Lower leg skin (tissue), 4 donors: ENCODE measurements at regions of chr3 and their contacts with region 1.

Region 1: GRCh38 chr3:77873598-77873997 is 833.7 kb downstream of the ROBO2 start:
- DNase-seq: no peak
- H3K4me3 ChIP-seq: no peak overlapping the region
- CTCF ChIP-seq: no peak
- POLR2A ChIP-seq: no peak

Region 2: GRCh38 chr3:78013653-78014052 is 140.1 kb after region 1 on chr3:
- intact Hi-C with region 1: no loop called
- DNase-seq: no peak
- H3K4me3 ChIP-seq: no peak overlapping the region
- CTCF ChIP-seq: no peak
- POLR2A ChIP-seq: no peak

Region 3: DNA sequence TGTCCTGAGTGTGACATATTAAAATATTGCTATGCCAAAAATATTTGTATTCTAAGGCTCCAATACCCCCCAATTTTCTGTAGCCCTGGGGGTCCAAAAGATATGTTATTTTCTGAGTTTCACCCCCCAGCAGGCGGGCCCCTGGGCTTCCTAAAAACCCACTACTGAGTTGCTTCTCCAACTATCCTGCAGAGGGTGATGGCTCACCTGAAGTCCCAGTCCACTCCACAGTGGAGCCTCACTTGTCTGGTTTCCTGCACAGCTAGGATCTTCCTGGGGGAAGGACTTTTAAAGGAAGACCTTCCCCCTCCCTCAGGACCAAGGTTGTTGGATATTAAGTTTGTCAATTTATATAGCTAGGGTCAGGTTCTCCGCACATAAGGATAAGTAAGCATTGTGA is 347.7 kb after region 1 on chr3:
- intact Hi-C with region 1: loop called (anchors 10 kb)
- DNase-seq: no peak
- H3K4me3 ChIP-seq: no peak overlapping the region
- CTCF ChIP-seq: no peak
- POLR2A ChIP-seq: no peak